ENCODE measurements at regions of chr16 and their contacts with region 1.

Region 1: GRCh38 chr16:56681939-56682702 is at the start of gene MT1X:
- DNase-seq: peak; percentile 81
- ATAC-seq: peak; percentile 97
- H3K4me3 ChIP-seq: peak within 1 kb of the TSS; percentile 67 to 81
- H3K27ac ChIP-seq: peak within 1 kb of the TSS; percentile 61
- H3K4me1 ChIP-seq: peaks cover 13 to 32% of the 10 kb centered on the region in 2 experiments; a peak in 3 of 4 replicates
- H3K27me3 ChIP-seq: no peaks in the 10 kb centered on the region
- CTCF ChIP-seq: no peak
- POLR2A ChIP-seq: peak; percentile 95
- RAD21 ChIP-seq: no peak
- total RNA-seq, gene MT1X: 50.2 TPM

Region 2: DNA sequence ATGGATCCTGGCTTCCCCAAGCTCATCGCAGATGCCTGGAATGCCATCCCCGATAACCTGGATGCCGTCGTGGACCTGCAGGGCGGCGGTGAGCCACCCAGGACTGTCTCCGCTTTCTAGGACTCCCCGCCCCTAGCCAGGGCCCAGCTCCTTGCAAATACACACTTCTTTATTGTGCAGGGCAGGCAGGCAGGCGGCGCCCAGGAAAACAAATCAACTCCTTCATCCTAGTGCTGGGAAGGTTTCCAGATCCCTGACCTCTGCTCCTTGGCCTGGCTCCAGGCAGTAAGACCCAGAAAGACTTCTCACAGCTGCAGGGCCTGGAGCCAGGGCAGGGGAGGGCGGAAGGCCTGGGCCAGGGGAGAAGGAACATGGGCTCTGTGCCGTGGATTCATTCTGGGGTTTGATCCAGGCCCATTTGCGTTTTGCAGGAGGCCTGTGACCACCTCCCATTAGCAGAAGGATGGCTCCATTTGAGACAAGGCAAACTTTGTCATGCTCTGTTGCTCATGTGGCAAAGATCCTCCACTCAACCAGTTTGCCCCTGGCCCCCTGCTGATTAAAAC is 1179.2 kb before region 1 on chr16:
- CTCF ChIA-PET with region 1: no interaction called
- POLR2A ChIA-PET with region 1: no interaction called
- RAD21 ChIA-PET with region 1: no interaction called
- intact Hi-C with region 1: loop called (anchors 5 kb)
- DNase-seq: peak; percentile 40
- ATAC-seq: peak; percentile 81
- H3K4me3 ChIP-seq: peak overlapping the region in 1 of 2 experiments; percentile 6; a peak in 1 of 4 replicates
- H3K27ac ChIP-seq: no peak overlapping the region; the same call in 1 of the 2 replicates
- H3K4me1 ChIP-seq: peaks cover 27 to 45% of the 10 kb centered on the region in 2 experiments
- H3K27me3 ChIP-seq: no peaks in the 10 kb centered on the region
- CTCF ChIP-seq: 0 out of 6 replicates have a peak, but pooled peaks of 1 of the 3 experiments have one; percentile 6
- POLR2A ChIP-seq: no peak
- RAD21 ChIP-seq: no peak

Region 3: DNA sequence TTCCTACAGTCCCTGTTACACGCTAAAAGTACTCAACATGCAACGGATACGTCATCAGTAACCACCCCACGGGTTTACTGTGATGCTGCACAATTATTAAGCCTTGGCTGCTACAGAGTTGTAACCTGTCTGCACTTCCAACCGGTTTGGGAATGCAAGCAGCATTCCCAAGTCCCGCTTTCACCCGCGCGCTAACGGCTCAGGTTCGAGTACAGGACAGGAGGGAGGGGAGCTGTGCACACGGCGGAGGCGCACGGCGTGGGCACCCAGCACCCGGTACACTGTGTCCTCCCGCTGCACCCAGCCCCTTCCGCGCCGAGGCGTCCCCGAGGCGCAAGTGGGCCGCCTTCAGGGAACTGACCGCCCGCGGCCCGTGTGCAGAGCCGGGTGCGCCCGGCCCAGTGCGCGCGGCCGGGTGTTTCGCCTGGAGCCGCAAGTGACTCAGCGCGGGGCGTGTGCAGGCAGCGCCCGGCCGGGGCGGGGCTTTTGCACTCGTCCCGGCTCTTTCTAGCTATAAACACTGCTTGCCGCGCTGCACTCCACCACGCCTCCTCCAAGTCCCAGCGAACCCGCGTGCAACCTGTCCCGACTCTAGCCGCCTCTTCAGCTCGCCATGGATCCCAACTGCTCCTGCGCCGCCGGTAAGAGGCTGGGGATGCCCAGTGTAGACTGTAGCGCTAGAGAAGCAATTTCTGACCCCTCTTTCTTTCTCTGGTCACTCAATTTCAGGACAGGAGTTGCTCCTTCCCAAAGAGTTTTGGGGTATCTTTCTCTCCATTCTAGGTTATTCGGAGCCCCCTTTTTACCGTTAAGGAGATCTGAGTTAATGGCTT is 73.9 kb before region 1 on chr16 and contains the start of gene MT2A:
- CTCF ChIA-PET with region 1: interaction called, 3 read pairs
- POLR2A ChIA-PET with region 1: interaction called, 5 read pairs
- RAD21 ChIA-PET with region 1: no interaction called
- intact Hi-C with region 1: loop called (anchors 2 kb)
- DNase-seq: peak; percentile 95
- ATAC-seq: peak; percentile 71
- H3K4me3 ChIP-seq: peak within 1 kb of the TSS; percentile 63 to 85
- H3K27ac ChIP-seq: peak within 1 kb of the TSS; percentile 96
- H3K4me1 ChIP-seq: peaks cover 64 to 86% of the 10 kb centered on the region in 2 experiments
- H3K27me3 ChIP-seq: no peaks in the 10 kb centered on the region
- CTCF ChIP-seq: no peak
- POLR2A ChIP-seq: peak; percentile 95
- RAD21 ChIP-seq: no peak
- total RNA-seq, gene MT2A: 710 TPM

Region 4: DNA sequence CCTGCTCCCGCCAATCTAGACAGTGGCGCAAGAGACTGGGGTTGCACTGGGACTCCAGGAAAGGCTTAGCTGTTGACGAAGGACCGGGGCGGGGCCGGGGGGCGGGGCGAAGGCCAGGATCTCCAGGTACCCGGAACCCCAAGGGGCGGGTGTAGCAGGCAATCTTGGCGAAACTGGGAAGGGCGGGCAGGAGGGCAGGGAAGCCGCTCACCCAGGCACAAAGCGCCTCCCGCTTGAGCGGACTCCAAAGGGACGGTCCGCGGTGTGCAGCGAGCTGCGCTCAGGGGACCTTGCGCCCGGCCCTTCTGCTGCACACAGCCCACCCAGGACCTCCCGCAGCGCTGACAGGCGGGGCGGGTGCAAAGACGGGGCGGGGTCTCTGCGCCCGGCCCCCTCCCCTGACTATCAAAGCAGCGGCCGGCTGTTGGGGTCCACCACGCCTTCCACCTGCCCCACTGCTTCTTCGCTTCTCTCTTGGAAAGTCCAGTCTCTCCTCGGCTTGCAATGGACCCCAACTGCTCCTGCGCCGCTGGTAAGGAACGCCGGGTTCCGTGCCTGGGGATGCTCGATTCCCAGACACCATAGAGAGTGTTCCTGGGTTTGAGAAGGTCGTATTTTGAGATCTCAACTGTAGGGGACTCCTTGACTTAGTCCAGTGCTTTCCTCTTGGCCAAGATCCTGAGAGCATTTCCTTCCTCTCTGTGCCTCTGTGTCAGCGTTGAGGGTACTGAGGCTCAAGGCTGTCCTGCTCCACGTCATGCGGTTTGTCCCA is 24.4 kb before region 1 on chr16 and contains the start of gene MT1F:
- CTCF ChIA-PET with region 1: no interaction called
- POLR2A ChIA-PET with region 1: interaction called, 3 read pairs
- RAD21 ChIA-PET with region 1: interaction called in 1 of 2 experiments, 3 read pairs
- intact Hi-C with region 1: loop called (anchors 2 kb)
- DNase-seq: peak; percentile 83
- ATAC-seq: peak; percentile 87
- H3K4me3 ChIP-seq: peak within 1 kb of the TSS; percentile 47 to 55
- H3K27ac ChIP-seq: no peak within 1 kb of the TSS; the same call in 1 of the 2 replicates
- H3K4me1 ChIP-seq: peaks cover 26 to 54% of the 10 kb centered on the region in 2 experiments
- H3K27me3 ChIP-seq: no peaks in the 10 kb centered on the region
- CTCF ChIP-seq: no peak
- POLR2A ChIP-seq: no peak
- RAD21 ChIP-seq: peak; percentile 37
- total RNA-seq, gene MT1F: 7.3 TPM